ENCODE measurements at regions of chr22 and their contacts with region 1.

Region 1: GRCh38 chr22:17950651-17951214 is 73.6 kb downstream of the MICAL3 start:
- DNase-seq: no peak
- ATAC-seq: no peak
- H3K4me3 ChIP-seq: no peak overlapping the region
- H3K27ac ChIP-seq: peak overlapping the region in 1 of 2 experiments; percentile 40; a peak in 2 of 6 replicates
- H3K4me1 ChIP-seq: peaks cover 43% of the 10 kb centered on the region
- CTCF ChIP-seq: no peak
- EP300 ChIP-seq: no peak
- POLR2A ChIP-seq: no peak
- RAD21 ChIP-seq: no peak

Region 2: GRCh38 chr22:17960695-17961445 is 10.1 kb after region 1 on chr22:
- CTCF ChIA-PET with region 1: interaction called, 12 read pairs
- POLR2A ChIA-PET with region 1: no interaction called
- DNase-seq: no peak
- ATAC-seq: no peak
- H3K4me3 ChIP-seq: no peak overlapping the region
- H3K27ac ChIP-seq: 0 out of 6 replicates have a peak overlapping the region, but pooled peaks of 1 of the 2 experiments have one; percentile 7
- H3K4me1 ChIP-seq: peaks cover 6% of the 10 kb centered on the region
- CTCF ChIP-seq: no peak
- EP300 ChIP-seq: no peak
- POLR2A ChIP-seq: no peak
- RAD21 ChIP-seq: no peak

Region 3: GRCh38 chr22:17980638-17981051 is 29.9 kb after region 1 on chr22:
- CTCF ChIA-PET with region 1: no interaction called
- POLR2A ChIA-PET with region 1: no interaction called
- DNase-seq: no peak
- ATAC-seq: peak in 1 of 2 experiments; percentile 59; a peak in 3 of 6 replicates
- H3K4me3 ChIP-seq: no peak overlapping the region
- H3K27ac ChIP-seq: no peak overlapping the region; a peak in 1 of 6 replicates
- H3K4me1 ChIP-seq: peaks cover 21% of the 10 kb centered on the region
- CTCF ChIP-seq: no peak
- EP300 ChIP-seq: no peak
- POLR2A ChIP-seq: no peak
- RAD21 ChIP-seq: no peak